Posterior vena cava (tissue), 2 donors: ENCODE measurements at regions of chr12 and their contacts with region 1.

Region 1: GRCh38 chr12:94140556-94140955 is 7.8 kb upstream of the PLXNC1 start:
- DNase-seq: no peak

Region 2: DNA sequence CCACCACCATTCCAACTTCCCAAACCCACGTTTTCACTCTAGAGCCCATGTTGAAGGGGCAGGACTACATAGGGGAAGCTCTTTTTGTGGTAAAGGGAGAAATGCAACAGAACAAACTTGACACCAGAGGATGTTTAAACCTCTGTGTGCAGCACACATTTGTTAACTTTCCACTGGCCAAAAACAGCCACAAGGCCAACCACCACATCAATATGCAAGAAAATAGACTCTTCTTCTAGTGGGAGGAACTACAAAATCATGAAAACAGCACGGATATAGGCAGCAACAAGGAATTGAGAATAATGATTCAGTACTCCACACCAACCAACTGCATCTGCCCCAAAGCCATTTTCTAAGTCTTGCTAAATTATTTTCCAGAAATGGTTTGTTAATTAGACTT is 385.4 kb after region 1 on chr12:
- intact Hi-C with region 1: loop called (anchors 5 kb)
- DNase-seq: no peak